Naive thymus-derived CD4-positive, alpha-beta T cell (primary cell): ENCODE measurements at regions of chr17 and their contacts with region 1.

Region 1: GRCh38 chr17:14308965-14309879 is 8.3 kb downstream of the HS3ST3B1 start:
- DNase-seq: peak; percentile 81 to 93 (median 90)
- ATAC-seq: peak; percentile 100
- H3K4me3 ChIP-seq: peak overlapping the region; percentile 56
- H3K4me3 Mint-ChIP-seq: peak overlapping the region; percentile 71 to 95 (median 86)
- H3K27ac ChIP-seq: peak overlapping the region; percentile 57
- H3K27ac Mint-ChIP-seq: peak overlapping the region in 8 of 9 donors; percentile 26 to 89 (median 63)
- H3K4me1 ChIP-seq: peaks cover 21 to 38% of the 10 kb centered on the region in 2 donors
- H3K4me1 Mint-ChIP-seq: peaks cover 47 to 83% (median 73%) of the 10 kb centered on the region in 7 donors
- H3K27me3 ChIP-seq: no peaks in the 10 kb centered on the region
- H3K27me3 Mint-ChIP-seq: no peaks in the 10 kb centered on the region

Region 2: GRCh38 chr17:14329998-14330411 is 20.8 kb after region 1 on chr17:
- CTCF ChIA-PET with region 1: interaction called, 3 read pairs
- POLR2A ChIA-PET with region 1: no interaction called
- intact Hi-C with region 1: loop called in 1 of 2 experiments (anchors 2 kb)
- DNase-seq: no peak
- ATAC-seq: peak; percentile 51
- H3K4me3 ChIP-seq: no peak overlapping the region
- H3K4me3 Mint-ChIP-seq: peak overlapping the region in 9 of 10 donors; percentile 17 to 70 (median 43)
- H3K27ac ChIP-seq: no peak overlapping the region
- H3K27ac Mint-ChIP-seq: peak overlapping the region in 8 of 9 donors; percentile 21 to 84 (median 70)
- H3K4me1 ChIP-seq: peaks cover 11 to 49% of the 10 kb centered on the region in 2 donors
- H3K4me1 Mint-ChIP-seq: peaks cover 61 to 100% (median 87%) of the 10 kb centered on the region in 7 donors
- H3K27me3 ChIP-seq: no peaks in the 10 kb centered on the region
- H3K27me3 Mint-ChIP-seq: no peaks in the 10 kb centered on the region

Region 3: DNA sequence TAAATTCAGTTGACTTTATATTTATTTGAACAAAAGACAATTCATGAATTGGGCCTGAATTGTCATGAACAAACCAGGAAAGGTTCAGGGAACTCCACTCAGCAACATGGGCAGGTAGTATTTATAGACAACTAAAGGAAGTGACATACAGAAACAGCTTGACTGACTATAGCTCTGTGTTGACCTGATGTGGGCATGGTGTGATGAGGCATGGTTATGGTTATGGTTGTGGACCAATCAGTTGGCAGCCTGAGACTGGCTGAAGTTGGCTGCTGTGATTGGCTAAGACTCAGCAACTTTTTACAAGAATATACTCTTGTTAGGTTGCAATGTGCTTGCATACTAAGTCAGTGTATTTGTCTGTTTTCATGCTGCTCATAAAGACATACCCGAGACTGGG is 100.1 kb after region 1 on chr17:
- CTCF ChIA-PET with region 1: no interaction called
- POLR2A ChIA-PET with region 1: no interaction called
- intact Hi-C with region 1: no loop called
- DNase-seq: no peak
- ATAC-seq: no peak
- H3K4me3 ChIP-seq: no peak overlapping the region
- H3K4me3 Mint-ChIP-seq: no peak overlapping the region
- H3K27ac ChIP-seq: no peak overlapping the region
- H3K27ac Mint-ChIP-seq: no peak overlapping the region
- H3K4me1 ChIP-seq: peaks cover 8% of the 10 kb centered on the region in 2 donors
- H3K4me1 Mint-ChIP-seq: peaks cover 11 to 37% (median 18%) of the 10 kb centered on the region in 7 donors
- H3K27me3 ChIP-seq: no peaks in the 10 kb centered on the region
- H3K27me3 Mint-ChIP-seq: no peaks in the 10 kb centered on the region